Right ventricle myocardium inferior (tissue), 1 donor: ENCODE measurements at regions of chr11 and their contacts with region 1.

Region 1: DNA sequence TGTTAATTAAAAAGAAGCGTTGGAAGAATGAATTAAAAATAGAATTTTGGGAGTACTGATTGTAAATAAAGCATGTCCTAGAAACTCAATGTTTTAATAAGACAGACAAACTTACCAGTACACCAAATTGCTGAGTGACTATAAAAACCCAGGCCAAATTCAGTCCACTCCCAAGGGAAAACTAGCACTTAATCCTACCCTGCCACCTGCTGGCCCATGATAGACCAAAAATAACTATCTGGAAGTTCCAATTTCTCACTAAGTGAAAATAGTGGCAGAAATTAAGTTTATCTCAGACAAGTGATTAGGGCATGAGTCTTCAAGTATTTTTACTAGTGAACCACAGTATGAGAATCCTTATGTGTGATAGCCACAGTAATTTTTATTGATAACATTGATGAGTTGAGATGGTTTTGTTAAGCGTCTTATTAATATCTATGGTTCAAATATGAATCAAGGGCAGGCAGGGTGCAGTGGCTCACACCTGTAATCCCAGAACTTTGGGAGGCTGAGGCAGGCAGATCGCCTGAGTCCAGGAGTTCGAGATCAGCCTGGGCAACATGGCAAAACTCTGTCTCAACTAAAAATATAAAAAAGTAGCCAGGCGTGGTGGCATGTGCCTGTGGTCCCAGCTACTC is 9.8 kb upstream of the DDX10 start:
- DNase-seq: no peak
- ATAC-seq: no peak

Region 2: GRCh38 chr11:108008656-108009496 is 646.2 kb before region 1 on chr11 and contains the start of gene CUL5:
- intact Hi-C with region 1: loop called (anchors 10 kb)
- DNase-seq: peak; percentile 95
- ATAC-seq: peak; percentile 98
- total RNA-seq, gene CUL5: 34.2 TPM

Region 3: GRCh38 chr11:108222686-108223448 is 432.2 kb before region 1 on chr11 and contains the start of gene ATM:
- intact Hi-C with region 1: loop called (anchors 2 kb)
- DNase-seq: peak; percentile 100
- ATAC-seq: peak; percentile 98
- total RNA-seq, gene ATM: 24.9 TPM

Region 4: GRCh38 chr11:108351458-108351857 is 303.7 kb before region 1 on chr11:
- intact Hi-C with region 1: loop called (anchors 5 kb)
- DNase-seq: no peak
- ATAC-seq: no peak

Region 5: GRCh38 chr11:108405706-108406105 is 249.4 kb before region 1 on chr11:
- intact Hi-C with region 1: no loop called
- DNase-seq: no peak
- ATAC-seq: no peak